ENCODE measurements at regions of chr5 and their contacts with region 1.

Region 1: DNA sequence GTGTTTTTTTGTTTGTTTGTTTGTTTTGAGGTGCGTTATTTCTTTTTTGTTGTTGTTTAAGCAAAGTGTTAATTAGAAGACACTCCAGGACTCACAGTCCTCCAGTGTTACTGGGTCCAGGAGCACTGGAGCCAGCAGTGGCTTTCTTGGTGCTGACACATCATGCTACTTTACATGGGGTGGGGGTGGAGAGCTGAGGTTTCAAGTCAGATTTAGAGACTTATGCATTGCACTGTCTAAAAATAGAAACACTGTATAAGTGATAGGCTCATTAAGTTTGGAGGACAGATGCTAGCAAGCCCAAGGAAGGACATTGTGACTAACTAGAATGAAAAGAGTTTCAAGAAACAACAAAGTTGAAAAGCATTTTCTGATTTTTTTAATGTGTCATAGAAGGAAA is 2209.2 kb downstream of the MAT2B start:
- DNase-seq: no peak
- H3K4me3 ChIP-seq: no peak overlapping the region
- H3K4me3 Mint-ChIP-seq: no peak overlapping the region
- H3K27ac Mint-ChIP-seq: no peak overlapping the region
- H3K4me1 ChIP-seq: no peaks in the 10 kb centered on the region
- H3K4me1 Mint-ChIP-seq: no peaks in the 10 kb centered on the region
- H3K27me3 ChIP-seq: no peaks in the 10 kb centered on the region
- H3K27me3 Mint-ChIP-seq: no peaks in the 10 kb centered on the region
- CTCF ChIP-seq: no peak

Region 2: GRCh38 chr5:165665735-165666400 is 48.7 kb before region 1 on chr5:
- CTCF ChIA-PET with region 1: interaction called, 12 read pairs
- POLR2A ChIA-PET with region 1: no interaction called
- intact Hi-C with region 1: no loop called
- DNase-seq: no peak
- H3K4me3 ChIP-seq: no peak overlapping the region
- H3K4me3 Mint-ChIP-seq: no peak overlapping the region
- H3K27ac Mint-ChIP-seq: no peak overlapping the region
- H3K4me1 ChIP-seq: no peaks in the 10 kb centered on the region
- H3K4me1 Mint-ChIP-seq: no peaks in the 10 kb centered on the region
- H3K27me3 ChIP-seq: no peaks in the 10 kb centered on the region
- H3K27me3 Mint-ChIP-seq: peaks cover 2% of the 10 kb centered on the region
- CTCF ChIP-seq: no peak

Region 3: GRCh38 chr5:165805756-165806155 is 91.2 kb after region 1 on chr5:
- CTCF ChIA-PET with region 1: no interaction called
- POLR2A ChIA-PET with region 1: no interaction called
- intact Hi-C with region 1: no loop called
- DNase-seq: peak; percentile 27 to 38
- H3K4me3 ChIP-seq: no peak overlapping the region
- H3K4me3 Mint-ChIP-seq: no peak overlapping the region
- H3K27ac Mint-ChIP-seq: no peak overlapping the region
- H3K4me1 ChIP-seq: no peaks in the 10 kb centered on the region
- H3K4me1 Mint-ChIP-seq: no peaks in the 10 kb centered on the region
- H3K27me3 ChIP-seq: no peaks in the 10 kb centered on the region
- H3K27me3 Mint-ChIP-seq: peaks cover 2% of the 10 kb centered on the region
- CTCF ChIP-seq: no peak